ENCODE measurements at regions of chr12 and their contacts with region 1.

Region 1: DNA sequence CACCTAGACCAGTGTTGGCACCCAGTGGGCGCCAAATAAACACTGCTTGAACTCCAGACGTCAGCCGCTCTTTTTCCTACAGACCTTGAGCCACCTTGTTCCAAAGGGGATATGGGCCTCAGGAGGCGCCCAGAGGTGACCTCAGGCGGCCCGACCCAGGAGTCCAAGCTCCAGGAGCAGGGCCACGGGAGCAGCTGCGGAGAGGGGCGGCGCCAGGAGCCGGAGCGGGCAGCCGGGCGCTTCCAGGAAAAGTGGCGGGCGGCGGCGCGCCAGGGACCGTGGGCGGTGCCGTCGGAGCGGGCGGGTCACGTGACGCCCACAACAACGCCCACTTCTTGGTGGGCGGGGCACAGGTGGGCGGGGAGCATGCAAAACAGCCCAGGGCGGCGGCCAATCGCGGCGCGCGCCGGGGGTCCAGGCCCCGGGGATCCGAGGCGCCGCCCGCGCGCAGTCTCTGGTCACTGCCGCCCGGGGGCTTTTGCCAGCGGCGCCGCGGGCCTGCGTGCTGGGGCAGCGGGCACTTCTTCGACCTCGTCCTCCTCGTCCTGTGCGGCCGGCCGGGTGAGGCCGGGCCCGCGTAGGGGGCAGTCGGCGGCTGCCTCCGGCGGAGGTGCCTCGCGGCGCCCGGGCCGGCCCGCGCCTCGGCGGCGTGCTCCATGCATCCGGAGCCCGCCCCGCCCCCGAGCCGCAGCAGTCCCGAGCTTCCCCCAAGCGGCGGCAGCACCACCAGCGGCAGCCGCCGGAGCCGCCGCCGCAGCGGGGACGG is at the start of gene ORAI1:
- DNase-seq: peak; percentile 96
- H3K4me3 Mint-ChIP-seq: peak within 1 kb of the TSS; percentile 92
- H3K27ac Mint-ChIP-seq: peak within 1 kb of the TSS; percentile 99
- H3K4me1 Mint-ChIP-seq: peaks cover 37% of the 10 kb centered on the region
- H3K27me3 Mint-ChIP-seq: no peaks in the 10 kb centered on the region
- total RNA-seq, gene ORAI1: 41.6 to 43.2 TPM

Region 2: GRCh38 chr12:120669055-120669840 is 957.0 kb before region 1 on chr12:
- CTCF ChIA-PET with region 1: no interaction called
- POLR2A ChIA-PET with region 1: no interaction called
- intact Hi-C with region 1: no loop called
- DNase-seq: no peak
- H3K4me3 Mint-ChIP-seq: no peak overlapping the region
- H3K27ac Mint-ChIP-seq: no peak overlapping the region
- H3K4me1 Mint-ChIP-seq: no peaks in the 10 kb centered on the region
- H3K27me3 Mint-ChIP-seq: peaks cover 1% of the 10 kb centered on the region

Region 3: GRCh38 chr12:121499929-121500793 is 126.1 kb before region 1 on chr12:
- CTCF ChIA-PET with region 1: interaction called, 17 read pairs
- POLR2A ChIA-PET with region 1: interaction called, 3 read pairs
- intact Hi-C with region 1: loop called (anchors 1 kb)
- DNase-seq: peak; percentile 79
- H3K4me3 Mint-ChIP-seq: no peak overlapping the region
- H3K27ac Mint-ChIP-seq: no peak overlapping the region
- H3K4me1 Mint-ChIP-seq: peaks cover 7% of the 10 kb centered on the region
- H3K27me3 Mint-ChIP-seq: no peaks in the 10 kb centered on the region

Region 4: GRCh38 chr12:121550974-121551634 is 75.2 kb before region 1 on chr12:
- CTCF ChIA-PET with region 1: interaction called, 81 read pairs
- POLR2A ChIA-PET with region 1: no interaction called
- intact Hi-C with region 1: loop called (anchors 2 kb)
- DNase-seq: no peak
- H3K4me3 Mint-ChIP-seq: no peak overlapping the region
- H3K27ac Mint-ChIP-seq: no peak overlapping the region
- H3K4me1 Mint-ChIP-seq: peaks cover 5% of the 10 kb centered on the region
- H3K27me3 Mint-ChIP-seq: no peaks in the 10 kb centered on the region

Region 5: GRCh38 chr12:121590476-121591143 is 35.7 kb before region 1 on chr12:
- CTCF ChIA-PET with region 1: interaction called, 6 read pairs
- POLR2A ChIA-PET with region 1: interaction called, 4 read pairs
- intact Hi-C with region 1: loop called (anchors 1 kb)
- DNase-seq: peak; percentile 80
- H3K4me3 Mint-ChIP-seq: peak overlapping the region; percentile 82
- H3K27ac Mint-ChIP-seq: peak overlapping the region; percentile 98
- H3K4me1 Mint-ChIP-seq: peaks cover 26% of the 10 kb centered on the region
- H3K27me3 Mint-ChIP-seq: no peaks in the 10 kb centered on the region

Region 6: GRCh38 chr12:121657305-121658008 is 31.2 kb after region 1 on chr12:
- CTCF ChIA-PET with region 1: interaction called, 20 read pairs
- POLR2A ChIA-PET with region 1: interaction called, 27 read pairs
- intact Hi-C with region 1: loop called (anchors 1 kb)
- DNase-seq: peak; percentile 79
- H3K4me3 Mint-ChIP-seq: no peak overlapping the region
- H3K27ac Mint-ChIP-seq: peak overlapping the region; percentile 98
- H3K4me1 Mint-ChIP-seq: peaks cover 52% of the 10 kb centered on the region
- H3K27me3 Mint-ChIP-seq: no peaks in the 10 kb centered on the region

Region 7: GRCh38 chr12:121688966-121689365 is 62.7 kb after region 1 on chr12:
- CTCF ChIA-PET with region 1: interaction called, 5 read pairs
- POLR2A ChIA-PET with region 1: interaction called, 5 read pairs
- intact Hi-C with region 1: loop called (anchors 1 kb)
- DNase-seq: no peak
- H3K4me3 Mint-ChIP-seq: no peak overlapping the region
- H3K27ac Mint-ChIP-seq: no peak overlapping the region
- H3K4me1 Mint-ChIP-seq: peaks cover 6% of the 10 kb centered on the region
- H3K27me3 Mint-ChIP-seq: no peaks in the 10 kb centered on the region

Region 8: DNA sequence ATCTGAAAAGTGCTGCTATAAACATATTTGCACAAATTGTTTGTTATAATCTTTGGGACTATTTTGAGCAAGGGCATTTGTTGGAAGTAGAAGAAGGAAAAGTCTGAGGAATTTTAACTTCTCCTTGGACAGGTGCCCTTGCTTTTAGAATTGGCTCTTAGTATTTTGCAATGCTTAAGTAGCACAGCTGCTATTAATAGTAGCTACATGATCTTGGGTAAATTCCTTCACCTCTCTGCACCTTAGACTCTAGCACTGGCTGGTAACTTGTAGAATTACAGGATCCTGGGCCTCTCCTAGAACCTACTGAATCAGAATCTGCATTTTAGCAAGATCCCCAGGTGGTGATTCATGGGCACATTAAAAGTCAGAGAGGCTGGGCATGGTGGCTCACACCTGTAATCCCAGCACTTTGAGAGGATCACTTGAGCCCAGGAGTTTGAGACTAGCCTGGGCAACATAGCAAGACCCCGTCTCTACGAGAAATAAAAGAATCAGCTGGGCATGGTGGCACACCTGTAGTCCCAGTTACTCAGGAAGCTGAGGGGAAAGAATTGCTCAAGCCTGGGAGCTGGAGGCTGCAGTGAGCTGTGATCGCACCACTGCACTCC is 75.5 kb after region 1 on chr12:
- CTCF ChIA-PET with region 1: no interaction called
- POLR2A ChIA-PET with region 1: no interaction called
- intact Hi-C with region 1: no loop called
- DNase-seq: no peak
- H3K4me3 Mint-ChIP-seq: no peak overlapping the region
- H3K27ac Mint-ChIP-seq: no peak overlapping the region
- H3K4me1 Mint-ChIP-seq: no peaks in the 10 kb centered on the region
- H3K27me3 Mint-ChIP-seq: no peaks in the 10 kb centered on the region